K562 (cell line): ENCODE measurements at regions of chr1 and their contacts with region 1.

Region 1: GRCh38 chr1:53899206-53899628 is 5.2 kb downstream of the DIO1 start:
- DNase-seq: no peak
- ATAC-seq: no peak
- H3K4me3 ChIP-seq: no peak overlapping the region
- H3K27ac ChIP-seq: no peak overlapping the region
- H3K4me1 ChIP-seq: no peaks in the 10 kb centered on the region; a peak in 2 of 5 replicates
- H3K27me3 ChIP-seq: no peaks in the 10 kb centered on the region
- CTCF ChIP-seq: no peak
- EP300 ChIP-seq: no peak
- POLR2A ChIP-seq: no peak
- RAD21 ChIP-seq: no peak

Region 2: DNA sequence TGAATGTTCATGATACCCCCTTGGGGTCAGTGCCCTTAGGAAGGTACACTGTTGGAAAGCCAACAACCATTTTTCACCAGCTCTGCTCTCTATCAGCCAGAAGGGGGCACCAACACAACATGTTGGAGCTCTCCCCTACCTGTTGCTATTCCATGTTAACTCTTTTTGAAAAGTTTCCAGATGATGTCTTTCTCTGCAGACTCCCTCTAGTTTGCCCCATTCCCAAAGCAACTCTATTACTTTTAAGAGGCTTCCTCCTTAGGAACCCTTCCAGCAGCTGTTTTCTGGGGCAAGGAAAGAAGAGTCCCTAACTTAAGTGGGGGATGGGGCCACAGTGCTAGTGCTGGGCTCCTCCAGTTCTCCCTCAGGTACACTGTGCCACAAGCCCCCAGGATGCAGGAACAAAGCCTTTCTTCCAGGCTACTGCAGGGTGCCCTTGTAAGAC is 38.2 kb before region 1 on chr1:
- CTCF ChIA-PET with region 1: no interaction called
- POLR2A ChIA-PET with region 1: no interaction called
- in situ Hi-C with region 1: no loop called
- intact Hi-C with region 1: no loop called
- DNase-seq: peak; percentile 70 to 82 (median 80)
- ATAC-seq: peak; percentile 97
- H3K4me3 ChIP-seq: no peak overlapping the region
- H3K27ac ChIP-seq: no peak overlapping the region
- H3K4me1 ChIP-seq: no peaks in the 10 kb centered on the region
- H3K27me3 ChIP-seq: no peaks in the 10 kb centered on the region
- CTCF ChIP-seq: peak; percentile 87 to 95 (median 91)
- EP300 ChIP-seq: no peak
- POLR2A ChIP-seq: no peak
- RAD21 ChIP-seq: peak; percentile 81 to 92

Region 3: DNA sequence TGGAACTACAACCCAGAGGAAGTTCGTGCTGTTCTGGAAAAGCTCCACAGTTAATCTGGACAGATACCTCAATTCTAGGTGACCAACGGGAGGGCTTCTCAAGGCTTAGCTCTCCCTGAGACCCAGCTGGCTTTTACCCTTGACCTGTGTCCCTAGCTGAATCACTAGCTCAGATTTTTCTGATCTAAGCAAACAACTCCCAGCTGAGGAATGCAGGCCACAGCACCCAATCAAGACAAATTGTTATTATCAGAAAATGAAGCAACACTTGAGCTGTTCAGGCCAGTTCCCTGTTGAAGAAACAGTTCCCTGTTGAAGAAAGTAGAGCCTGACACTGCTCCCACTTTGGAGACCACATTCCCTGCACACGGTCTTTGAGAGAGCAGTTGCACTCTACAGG is 10.7 kb after region 1 on chr1:
- CTCF ChIA-PET with region 1: no interaction called
- POLR2A ChIA-PET with region 1: interaction called, 11 read pairs
- in situ Hi-C with region 1: no loop called
- intact Hi-C with region 1: no loop called
- DNase-seq: no peak
- ATAC-seq: no peak
- H3K4me3 ChIP-seq: no peak overlapping the region
- H3K27ac ChIP-seq: no peak overlapping the region
- H3K4me1 ChIP-seq: no peaks in the 10 kb centered on the region; a peak in 1 of 5 replicates
- H3K27me3 ChIP-seq: no peaks in the 10 kb centered on the region
- CTCF ChIP-seq: no peak
- EP300 ChIP-seq: no peak
- POLR2A ChIP-seq: no peak
- RAD21 ChIP-seq: no peak